ENCODE measurements at regions of chr18 and their contacts with region 1.

Region 1: DNA sequence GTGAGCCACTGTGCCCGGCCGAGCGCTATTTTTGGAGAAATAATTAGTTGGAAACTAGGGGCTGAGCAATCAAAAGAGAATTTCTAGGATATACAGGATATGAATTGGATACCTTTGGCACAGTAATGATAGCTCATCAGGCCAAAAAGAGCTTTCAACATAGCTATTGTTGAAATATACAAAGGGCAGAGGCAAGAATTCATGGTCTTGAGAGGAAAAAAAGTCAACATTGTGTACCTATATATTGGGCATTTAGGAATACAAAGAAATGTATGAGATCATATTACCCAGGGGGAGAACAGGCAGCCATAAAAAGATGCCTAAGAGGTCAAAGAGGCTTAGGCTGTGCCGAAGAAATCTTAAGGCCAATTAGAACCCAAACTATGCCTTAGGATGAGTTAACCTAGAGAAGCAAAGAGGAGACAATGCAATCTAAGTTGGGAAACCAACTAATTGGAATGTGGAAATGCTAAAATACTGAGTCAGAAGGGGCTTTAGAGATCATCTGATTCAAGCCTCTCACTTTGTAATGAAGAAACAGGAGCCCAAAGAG is 99.0 kb downstream of the RBBP8 start:
- DNase-seq: no peak
- ATAC-seq: no peak
- H3K4me3 ChIP-seq: no peak overlapping the region
- H3K27ac ChIP-seq: no peak overlapping the region
- H3K4me1 ChIP-seq: peaks cover 0 to 2% of the 10 kb centered on the region in 2 donors
- H3K27me3 ChIP-seq: no peaks in the 10 kb centered on the region

Region 2: DNA sequence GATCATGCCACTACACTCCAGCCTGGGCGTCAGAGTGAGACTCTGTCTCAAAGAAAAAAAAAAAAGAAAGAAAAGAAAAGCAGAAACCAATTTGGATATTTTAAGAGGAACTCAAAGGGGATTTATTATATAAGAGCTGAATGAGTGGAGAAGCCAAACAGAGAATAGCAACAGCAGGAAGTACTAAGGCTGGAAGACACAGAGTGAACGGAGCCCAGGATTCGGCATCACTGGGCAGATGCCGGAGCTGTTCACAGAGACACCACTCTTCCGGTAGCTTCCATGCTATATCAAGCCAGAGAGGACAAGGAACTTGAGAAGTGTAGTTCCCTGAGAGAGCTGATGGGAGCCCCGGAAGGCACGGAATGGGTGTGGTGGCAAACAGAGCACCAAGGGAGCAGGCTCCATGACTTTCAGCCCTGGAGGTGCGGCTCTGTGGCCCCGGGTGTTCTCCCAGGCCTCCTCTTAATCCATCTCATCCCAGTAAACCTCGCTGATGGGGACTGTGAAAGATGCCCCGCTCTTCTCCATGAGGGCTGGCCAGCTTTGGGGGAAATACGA is 56.3 kb after region 1 on chr18:
- intact Hi-C with region 1: no loop called
- DNase-seq: no peak
- ATAC-seq: no peak
- H3K4me3 ChIP-seq: no peak overlapping the region
- H3K27ac ChIP-seq: no peak overlapping the region
- H3K4me1 ChIP-seq: no peaks in the 10 kb centered on the region
- H3K27me3 ChIP-seq: no peaks in the 10 kb centered on the region

Region 3: GRCh38 chr18:23377669-23378301 is 345.7 kb after region 1 on chr18:
- intact Hi-C with region 1: loop called in 1 of 2 experiments (anchors 2 kb)
- DNase-seq: no peak
- ATAC-seq: peak; percentile 84
- H3K4me3 ChIP-seq: no peak overlapping the region
- H3K27ac ChIP-seq: peak overlapping the region in 1 of 2 donors; percentile 76
- H3K4me1 ChIP-seq: peaks cover 0 to 4% of the 10 kb centered on the region in 2 donors
- H3K27me3 ChIP-seq: no peaks in the 10 kb centered on the region

Region 4: DNA sequence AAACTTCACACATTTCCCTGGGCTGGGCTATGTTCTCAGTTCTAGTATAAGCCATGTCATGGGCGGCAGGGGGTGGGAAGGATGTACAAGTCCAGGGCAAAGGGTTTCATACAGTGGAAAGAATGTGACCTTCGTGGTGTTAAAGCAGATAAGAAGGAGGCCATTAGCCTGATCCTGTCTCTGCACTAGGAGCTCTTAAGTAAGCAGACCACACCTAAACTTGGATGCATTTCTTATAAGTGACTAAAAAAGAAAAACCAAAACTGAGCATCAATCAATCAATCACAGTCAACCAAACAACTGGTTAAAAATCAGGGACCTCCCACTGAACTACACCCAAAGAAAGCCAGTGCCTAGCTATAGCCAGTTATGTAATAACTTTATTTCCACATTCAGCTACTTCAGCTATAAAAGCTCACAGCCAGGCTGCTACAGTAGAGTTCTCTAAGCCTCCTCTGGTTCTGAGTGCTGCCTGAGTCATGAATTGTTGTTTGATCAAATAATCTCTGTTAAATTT is 374.2 kb after region 1 on chr18:
- intact Hi-C with region 1: loop called (anchors 2 to 10 kb)
- DNase-seq: no peak
- ATAC-seq: no peak
- H3K4me3 ChIP-seq: no peak overlapping the region
- H3K27ac ChIP-seq: no peak overlapping the region
- H3K4me1 ChIP-seq: no peaks in the 10 kb centered on the region
- H3K27me3 ChIP-seq: no peaks in the 10 kb centered on the region

Region 5: DNA sequence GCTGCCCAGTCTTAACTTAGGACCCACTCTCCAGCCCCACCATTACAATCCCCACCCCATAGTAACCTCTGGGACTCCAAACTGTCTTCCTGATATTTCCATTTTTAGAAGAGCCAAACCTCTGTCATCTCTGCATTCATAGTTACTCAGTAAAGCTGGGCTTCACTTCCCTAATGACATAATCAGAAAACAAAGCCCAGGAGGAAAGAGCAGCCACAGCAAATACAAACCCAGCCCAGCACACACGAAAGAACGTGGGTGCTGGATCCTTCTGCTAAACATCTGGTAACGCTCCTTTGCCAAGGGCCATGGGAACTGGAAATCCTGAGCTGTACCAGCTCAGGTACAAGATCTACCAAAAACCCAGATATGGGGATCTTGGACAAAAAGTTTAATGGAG is 384.2 kb after region 1 on chr18:
- intact Hi-C with region 1: loop called (anchors 2 to 10 kb)
- DNase-seq: no peak
- ATAC-seq: no peak
- H3K4me3 ChIP-seq: no peak overlapping the region
- H3K27ac ChIP-seq: no peak overlapping the region
- H3K4me1 ChIP-seq: peaks cover 0 to 3% of the 10 kb centered on the region in 2 donors
- H3K27me3 ChIP-seq: no peaks in the 10 kb centered on the region